WTC11 (cell line): ENCODE measurements at regions of chr14 and their contacts with region 1.

Region 1: GRCh38 chr14:76962303-76962660 is 66.2 kb downstream of the IRF2BPL start:
- DNase-seq: no peak
- ATAC-seq: no peak
- H3K4me3 Mint-ChIP-seq: peak overlapping the region; percentile 59
- H3K27ac Mint-ChIP-seq: peak overlapping the region; percentile 100
- H3K4me1 Mint-ChIP-seq: peaks cover 87% of the 10 kb centered on the region
- H3K27me3 Mint-ChIP-seq: no peaks in the 10 kb centered on the region
- CTCF ChIP-seq: no peak

Region 2: DNA sequence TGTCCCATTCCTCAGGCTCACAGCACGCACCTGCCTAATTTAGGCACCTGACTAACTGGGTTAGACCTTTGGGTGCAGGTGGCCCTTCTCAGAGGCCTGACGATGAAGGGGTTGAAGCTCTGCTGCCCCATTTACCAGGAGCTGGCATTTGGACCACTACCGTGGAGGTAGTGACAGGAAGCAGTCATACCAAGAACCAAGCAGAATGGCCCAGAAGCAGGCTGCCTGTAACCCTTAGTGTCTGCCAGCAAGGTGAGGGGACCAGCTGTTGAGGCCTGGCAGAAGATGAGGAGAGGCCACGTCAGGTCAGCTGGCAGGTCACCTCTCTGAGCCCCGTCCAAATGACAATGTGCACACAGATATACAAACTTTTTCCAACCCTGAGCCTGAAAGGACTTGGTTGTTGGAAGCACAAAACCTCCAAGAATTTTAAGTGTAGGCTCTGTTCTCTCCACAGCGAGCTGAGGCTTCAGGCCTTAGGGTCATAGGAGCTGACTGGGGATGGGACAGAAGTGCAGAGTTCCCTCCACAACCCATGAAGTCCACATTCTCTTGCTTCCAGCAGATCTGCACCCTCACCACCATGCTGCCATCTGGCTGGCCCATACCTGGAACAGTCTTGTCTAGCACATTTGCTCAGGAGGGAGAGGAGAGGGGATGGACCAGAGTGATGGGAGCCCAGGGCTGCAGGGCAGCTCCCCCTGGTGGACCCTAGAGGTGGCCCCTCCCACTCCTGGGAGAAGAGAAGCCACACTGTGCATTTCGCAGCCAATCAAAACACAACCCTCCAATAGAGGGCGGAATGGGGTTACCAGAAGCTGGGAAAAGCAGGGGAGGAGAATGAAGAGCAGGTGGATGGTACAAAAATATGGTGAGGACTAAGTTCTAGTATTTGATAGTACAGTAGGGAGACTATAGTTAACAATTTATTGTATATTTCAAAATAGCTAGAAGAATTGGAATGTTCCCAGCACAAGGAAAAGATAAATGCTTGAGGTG is 177.7 kb before region 1 on chr14:
- CTCF ChIA-PET with region 1: no interaction called
- POLR2A ChIA-PET with region 1: no interaction called
- DNase-seq: peak; percentile 91
- ATAC-seq: peak; percentile 99
- H3K4me3 Mint-ChIP-seq: no peak overlapping the region
- H3K27ac Mint-ChIP-seq: no peak overlapping the region
- H3K4me1 Mint-ChIP-seq: peaks cover 3% of the 10 kb centered on the region; the same call in 1 of the 2 replicates
- H3K27me3 Mint-ChIP-seq: peaks cover 2% of the 10 kb centered on the region; the same call in 1 of the 2 replicates
- CTCF ChIP-seq: peak; percentile 77

Region 3: DNA sequence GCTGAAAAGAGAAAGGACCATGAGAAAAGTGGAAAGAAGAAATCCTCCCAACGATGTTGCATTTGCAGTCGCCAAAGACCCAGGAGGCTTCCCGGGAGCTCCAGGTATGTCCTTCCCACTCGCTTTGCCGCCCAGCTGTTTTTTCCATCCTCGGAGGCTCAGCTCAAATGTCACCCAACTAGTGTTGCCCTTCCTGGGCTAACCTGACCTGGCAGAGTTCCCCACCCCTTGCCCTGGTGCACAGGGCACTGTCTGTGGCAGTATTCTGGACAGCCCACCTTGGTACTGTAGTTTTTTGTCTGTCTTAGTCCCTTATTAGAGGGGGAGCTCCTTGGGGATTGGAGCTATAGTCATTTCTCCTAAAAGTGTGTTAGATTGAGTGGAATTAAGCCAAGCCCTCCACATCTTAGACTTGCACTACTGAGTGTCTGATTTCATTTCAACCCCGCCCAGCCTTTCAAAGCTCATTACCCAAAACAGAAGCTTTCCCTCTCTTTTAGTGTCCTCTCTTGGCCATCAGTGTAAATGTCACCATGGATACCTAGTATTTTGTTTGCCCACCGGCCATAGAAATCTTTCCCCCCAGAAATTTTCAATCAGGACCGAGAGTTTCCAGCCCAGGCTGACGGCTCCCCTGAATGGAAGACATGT is 61.7 kb before region 1 on chr14:
- CTCF ChIA-PET with region 1: no interaction called
- POLR2A ChIA-PET with region 1: no interaction called
- DNase-seq: no peak
- ATAC-seq: no peak
- H3K4me3 Mint-ChIP-seq: no peak overlapping the region
- H3K27ac Mint-ChIP-seq: no peak overlapping the region
- H3K4me1 Mint-ChIP-seq: peaks cover 8% of the 10 kb centered on the region
- H3K27me3 Mint-ChIP-seq: no peaks in the 10 kb centered on the region
- CTCF ChIP-seq: no peak

Region 4: GRCh38 chr14:76947078-76947837 is 15.0 kb before region 1 on chr14:
- CTCF ChIA-PET with region 1: interaction called, 26 read pairs
- POLR2A ChIA-PET with region 1: interaction called, 19 read pairs
- DNase-seq: peak; percentile 94
- ATAC-seq: peak; percentile 82
- H3K4me3 Mint-ChIP-seq: peak overlapping the region; percentile 49
- H3K27ac Mint-ChIP-seq: peak overlapping the region; percentile 99
- H3K4me1 Mint-ChIP-seq: peaks cover 51% of the 10 kb centered on the region
- H3K27me3 Mint-ChIP-seq: no peaks in the 10 kb centered on the region
- CTCF ChIP-seq: no peak

Region 5: DNA sequence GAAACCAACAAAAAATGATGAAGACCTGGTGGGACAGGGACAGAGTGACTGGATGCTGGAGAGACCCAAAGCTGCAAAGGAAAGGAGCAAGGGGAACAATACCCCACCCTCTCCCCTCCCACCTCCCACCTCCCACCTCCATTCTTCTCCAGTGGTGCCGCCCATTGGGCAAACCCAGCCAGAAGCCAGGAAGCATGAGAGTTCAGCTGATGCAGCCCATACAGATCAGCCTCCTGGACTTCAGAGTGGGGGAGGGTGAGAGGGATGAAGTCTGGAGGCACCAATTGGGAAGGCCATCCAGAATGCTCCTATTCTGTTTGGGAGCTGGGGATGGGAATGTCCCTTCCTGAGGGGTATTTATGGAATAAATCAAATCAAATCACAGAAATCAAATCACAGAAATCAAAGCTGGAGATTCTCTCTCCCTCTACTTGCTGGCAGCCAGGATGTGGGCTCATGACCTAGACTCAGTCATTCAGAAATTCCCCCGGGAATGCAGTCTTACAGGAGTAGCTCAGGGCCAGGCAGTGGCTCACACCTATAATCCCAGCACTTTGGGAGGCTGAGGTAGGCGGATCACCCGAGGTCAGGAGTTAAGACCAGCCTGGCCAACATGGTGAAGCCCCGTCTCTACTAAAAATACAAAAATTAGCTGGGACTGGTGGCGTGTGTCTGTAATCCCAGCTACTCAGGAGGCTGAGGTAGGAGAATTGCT is 35.1 kb after region 1 on chr14:
- CTCF ChIA-PET with region 1: interaction called, 10 read pairs
- POLR2A ChIA-PET with region 1: interaction called, 9 read pairs
- DNase-seq: no peak
- ATAC-seq: peak; percentile 10; the same call in 1 of the 2 replicates
- H3K4me3 Mint-ChIP-seq: no peak overlapping the region
- H3K27ac Mint-ChIP-seq: no peak overlapping the region
- H3K4me1 Mint-ChIP-seq: peaks cover 54% of the 10 kb centered on the region
- H3K27me3 Mint-ChIP-seq: no peaks in the 10 kb centered on the region
- CTCF ChIP-seq: no peak

Region 6: GRCh38 chr14:77014004-77014604 is 51.8 kb after region 1 on chr14:
- CTCF ChIA-PET with region 1: interaction called, 10 read pairs
- POLR2A ChIA-PET with region 1: interaction called, 5 read pairs
- DNase-seq: no peak
- ATAC-seq: peak; percentile 68
- H3K4me3 Mint-ChIP-seq: no peak overlapping the region
- H3K27ac Mint-ChIP-seq: peak overlapping the region; percentile 67; the same call in 1 of the 2 replicates
- H3K4me1 Mint-ChIP-seq: peaks cover 29% of the 10 kb centered on the region
- H3K27me3 Mint-ChIP-seq: no peaks in the 10 kb centered on the region
- CTCF ChIP-seq: no peak

Region 7: GRCh38 chr14:77028384-77029231 is 66.3 kb after region 1 on chr14 and contains the start of gene IRF2BPL:
- CTCF ChIA-PET with region 1: interaction called, 18 read pairs
- POLR2A ChIA-PET with region 1: interaction called, 45 read pairs
- DNase-seq: peak; percentile 96
- ATAC-seq: peak; percentile 43
- H3K4me3 Mint-ChIP-seq: peak within 1 kb of the TSS; percentile 76
- H3K27ac Mint-ChIP-seq: peak within 1 kb of the TSS; percentile 98
- H3K4me1 Mint-ChIP-seq: peaks cover 52% of the 10 kb centered on the region
- H3K27me3 Mint-ChIP-seq: peaks cover 2% of the 10 kb centered on the region; the same call in 1 of the 2 replicates
- CTCF ChIP-seq: no peak
- total RNA-seq, gene IRF2BPL: 106 to 126 TPM (median 110 TPM) in 3 replicates

Region 8: DNA sequence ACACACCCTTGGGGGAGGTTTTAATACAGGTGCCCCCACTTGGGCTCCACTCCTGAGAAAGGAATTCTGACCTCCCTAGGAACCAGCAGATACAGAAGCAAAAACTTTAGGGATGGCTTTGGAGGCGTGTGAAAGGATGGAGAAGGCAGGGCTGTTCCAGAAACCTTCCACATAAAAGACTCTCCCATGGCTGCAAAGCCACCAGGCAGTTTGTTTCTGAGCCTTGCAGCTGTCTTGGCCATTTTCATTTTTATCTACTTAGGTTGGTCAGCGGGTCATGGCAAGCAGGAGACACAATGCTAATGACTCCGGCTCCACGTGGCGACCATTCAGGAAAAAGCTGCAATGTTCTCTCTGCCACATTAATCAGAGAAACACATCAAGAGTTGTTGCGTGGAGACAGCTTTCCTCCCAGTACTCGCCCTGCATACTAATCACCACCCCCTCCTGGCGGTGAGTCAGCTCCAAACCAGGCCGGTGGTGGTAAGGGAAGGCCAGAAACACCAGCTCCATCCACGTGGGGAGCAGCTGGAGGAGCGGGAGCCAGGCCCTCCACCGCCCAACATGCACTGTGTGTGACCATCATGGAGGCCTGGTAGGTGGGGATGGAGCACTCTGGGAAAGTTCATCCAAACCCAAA is 97.1 kb after region 1 on chr14:
- CTCF ChIA-PET with region 1: interaction called, 11 read pairs
- POLR2A ChIA-PET with region 1: interaction called, 3 read pairs
- DNase-seq: peak; percentile 61
- ATAC-seq: peak; percentile 90
- H3K4me3 Mint-ChIP-seq: no peak overlapping the region
- H3K27ac Mint-ChIP-seq: no peak overlapping the region
- H3K4me1 Mint-ChIP-seq: peaks cover 22% of the 10 kb centered on the region
- H3K27me3 Mint-ChIP-seq: no peaks in the 10 kb centered on the region
- CTCF ChIP-seq: no peak

Region 9: DNA sequence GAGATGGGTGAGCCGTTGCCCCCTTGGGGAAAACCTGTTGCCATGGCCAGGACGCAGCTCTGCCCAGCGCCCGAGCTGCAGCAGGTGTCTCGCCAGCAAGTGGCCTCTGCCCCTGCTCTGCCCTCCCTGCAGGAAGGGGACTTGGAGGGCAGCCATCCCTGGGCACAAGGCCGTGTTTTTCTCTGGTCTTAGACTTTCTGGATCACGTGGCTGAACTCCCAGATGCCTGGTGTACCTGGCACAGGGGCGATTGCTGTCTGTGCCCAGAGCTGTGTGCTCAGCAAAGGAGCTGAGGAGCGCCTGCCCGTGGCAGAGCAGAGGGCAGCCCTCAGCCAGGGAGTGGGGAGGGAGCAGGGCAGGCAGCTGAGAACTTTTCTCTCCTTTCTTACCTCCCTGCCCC is 257.3 kb after region 1 on chr14:
- CTCF ChIA-PET with region 1: no interaction called
- POLR2A ChIA-PET with region 1: no interaction called
- DNase-seq: no peak
- ATAC-seq: no peak
- H3K4me3 Mint-ChIP-seq: no peak overlapping the region
- H3K27ac Mint-ChIP-seq: no peak overlapping the region
- H3K4me1 Mint-ChIP-seq: peaks cover 43% of the 10 kb centered on the region
- H3K27me3 Mint-ChIP-seq: no peaks in the 10 kb centered on the region
- CTCF ChIP-seq: no peak